ENCODE measurements at regions of chr4 and their contacts with region 1.

Region 1: GRCh38 chr4:82268050-82268825 is 105.6 kb downstream of the HNRNPD start:
- DNase-seq: peak; percentile 51
- ATAC-seq: peak; percentile 99
- H3K4me3 ChIP-seq: no peak overlapping the region
- H3K27ac ChIP-seq: no peak overlapping the region
- H3K4me1 ChIP-seq: peaks cover 20% of the 10 kb centered on the region
- H3K27me3 ChIP-seq: no peaks in the 10 kb centered on the region; a peak in 1 of 5 replicates
- CTCF ChIP-seq: peak; percentile 82
- EP300 ChIP-seq: no peak
- POLR2A ChIP-seq: no peak
- RAD21 ChIP-seq: no peak; the same call in 1 of the 2 replicates

Region 2: GRCh38 chr4:81405894-81406401 is 862.3 kb before region 1 on chr4:
- CTCF ChIA-PET with region 1: interaction called, 17 read pairs
- POLR2A ChIA-PET with region 1: no interaction called
- in situ Hi-C with region 1: no loop called
- intact Hi-C with region 1: loop called (anchors 1 kb)
- DNase-seq: peak; percentile 81
- ATAC-seq: peak; percentile 78
- H3K4me3 ChIP-seq: no peak overlapping the region
- H3K27ac ChIP-seq: no peak overlapping the region
- H3K4me1 ChIP-seq: no peaks in the 10 kb centered on the region
- H3K27me3 ChIP-seq: no peaks in the 10 kb centered on the region; a peak in 1 of 5 replicates
- CTCF ChIP-seq: peak; percentile 75
- EP300 ChIP-seq: no peak
- POLR2A ChIP-seq: no peak
- RAD21 ChIP-seq: peak; percentile 62; the same call in 1 of the 2 replicates

Region 3: DNA sequence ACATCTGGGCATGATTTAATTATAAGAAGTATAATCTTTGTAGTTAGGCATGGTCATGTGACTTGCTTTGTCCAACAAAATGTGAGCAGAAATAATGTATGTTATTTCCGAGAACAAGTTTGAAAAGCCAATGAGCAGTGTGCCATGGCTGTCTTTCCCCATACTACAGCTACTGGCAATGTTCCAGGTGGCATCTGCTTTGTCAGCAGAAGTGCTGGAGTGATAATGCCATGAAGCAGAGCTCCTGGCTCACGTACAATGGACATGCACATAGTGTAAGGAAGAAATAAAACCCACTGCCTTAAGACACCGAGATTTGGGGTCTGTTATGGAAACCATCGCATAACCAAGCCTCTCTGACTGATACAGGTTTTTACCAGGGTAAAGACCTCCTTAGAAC is 583.9 kb before region 1 on chr4:
- CTCF ChIA-PET with region 1: no interaction called
- POLR2A ChIA-PET with region 1: no interaction called
- in situ Hi-C with region 1: no loop called
- intact Hi-C with region 1: no loop called
- DNase-seq: no peak
- ATAC-seq: no peak
- H3K4me3 ChIP-seq: no peak overlapping the region
- H3K27ac ChIP-seq: no peak overlapping the region
- H3K4me1 ChIP-seq: no peaks in the 10 kb centered on the region
- H3K27me3 ChIP-seq: no peaks in the 10 kb centered on the region
- CTCF ChIP-seq: no peak
- EP300 ChIP-seq: no peak
- POLR2A ChIP-seq: no peak
- RAD21 ChIP-seq: no peak

Region 4: GRCh38 chr4:82138374-82138773 is 129.9 kb before region 1 on chr4:
- CTCF ChIA-PET with region 1: no interaction called
- POLR2A ChIA-PET with region 1: no interaction called
- in situ Hi-C with region 1: no loop called
- intact Hi-C with region 1: no loop called
- DNase-seq: no peak
- ATAC-seq: no peak
- H3K4me3 ChIP-seq: no peak overlapping the region
- H3K27ac ChIP-seq: no peak overlapping the region
- H3K4me1 ChIP-seq: no peaks in the 10 kb centered on the region
- H3K27me3 ChIP-seq: no peaks in the 10 kb centered on the region
- CTCF ChIP-seq: no peak
- EP300 ChIP-seq: no peak
- POLR2A ChIP-seq: no peak
- RAD21 ChIP-seq: no peak

Region 5: GRCh38 chr4:82284858-82285805 is 16.9 kb after region 1 on chr4:
- CTCF ChIA-PET with region 1: no interaction called
- POLR2A ChIA-PET with region 1: no interaction called
- in situ Hi-C with region 1: no loop called
- intact Hi-C with region 1: loop called (anchors 1 kb)
- DNase-seq: peak; percentile 98
- ATAC-seq: peak; percentile 100
- H3K4me3 ChIP-seq: peak overlapping the region; percentile 55 to 62 (median 55)
- H3K27ac ChIP-seq: peak overlapping the region; percentile 18
- H3K4me1 ChIP-seq: peaks cover 33% of the 10 kb centered on the region
- H3K27me3 ChIP-seq: no peaks in the 10 kb centered on the region
- CTCF ChIP-seq: peak; percentile 82
- EP300 ChIP-seq: no peak
- POLR2A ChIP-seq: no peak
- RAD21 ChIP-seq: 0 out of 2 replicates have a peak, but pooled peaks have one; percentile 27

Region 6: DNA sequence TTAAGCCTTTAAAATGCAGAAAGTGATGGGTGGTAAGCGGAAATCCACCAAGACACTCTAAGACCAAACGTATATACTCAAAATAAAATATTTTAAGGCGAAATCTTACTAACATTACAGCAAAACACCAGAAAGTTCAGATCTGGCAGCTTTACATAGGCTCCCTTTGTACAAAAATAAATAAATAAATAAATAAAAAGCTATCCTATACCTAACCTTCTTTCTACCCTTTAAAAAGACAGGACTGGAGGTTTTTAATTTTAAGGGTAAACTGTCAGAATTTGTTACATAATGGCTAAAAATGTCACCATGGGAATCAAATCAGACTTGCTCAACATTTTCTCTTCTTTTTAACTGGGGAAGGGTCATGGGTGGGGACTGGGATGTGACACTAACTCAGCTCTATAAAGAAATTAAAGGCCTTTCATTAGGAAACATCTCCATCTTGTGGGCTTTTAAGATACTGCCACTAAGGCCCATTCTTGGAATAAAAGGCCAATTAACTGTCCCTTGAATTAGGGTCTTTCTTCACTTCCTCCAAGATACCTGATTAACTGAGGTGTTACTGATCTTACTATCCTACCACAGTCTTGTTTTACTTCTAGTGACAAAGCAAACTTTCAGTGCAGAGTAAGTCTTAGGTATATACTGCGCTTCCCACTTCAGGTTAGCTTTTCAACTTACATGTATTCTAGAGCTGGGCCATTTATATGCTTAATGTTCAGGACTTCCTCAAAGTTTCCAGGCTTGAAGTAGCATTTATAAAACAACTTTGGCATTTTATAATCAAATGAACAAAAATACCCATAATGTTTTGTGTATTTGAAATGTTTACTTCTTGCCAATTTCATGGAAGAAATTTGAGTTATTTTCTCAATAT is 92.3 kb after region 1 on chr4:
- CTCF ChIA-PET with region 1: no interaction called
- POLR2A ChIA-PET with region 1: no interaction called
- in situ Hi-C with region 1: no loop called
- intact Hi-C with region 1: loop called (anchors 2 kb)
- DNase-seq: no peak
- ATAC-seq: peak; percentile 60
- H3K4me3 ChIP-seq: no peak overlapping the region
- H3K27ac ChIP-seq: no peak overlapping the region
- H3K4me1 ChIP-seq: peaks cover 44% of the 10 kb centered on the region
- H3K27me3 ChIP-seq: no peaks in the 10 kb centered on the region
- CTCF ChIP-seq: peak; percentile 54
- EP300 ChIP-seq: no peak
- POLR2A ChIP-seq: no peak
- RAD21 ChIP-seq: no peak